ENCODE measurements at regions of chr12 and their contacts with region 1.

Region 1: DNA sequence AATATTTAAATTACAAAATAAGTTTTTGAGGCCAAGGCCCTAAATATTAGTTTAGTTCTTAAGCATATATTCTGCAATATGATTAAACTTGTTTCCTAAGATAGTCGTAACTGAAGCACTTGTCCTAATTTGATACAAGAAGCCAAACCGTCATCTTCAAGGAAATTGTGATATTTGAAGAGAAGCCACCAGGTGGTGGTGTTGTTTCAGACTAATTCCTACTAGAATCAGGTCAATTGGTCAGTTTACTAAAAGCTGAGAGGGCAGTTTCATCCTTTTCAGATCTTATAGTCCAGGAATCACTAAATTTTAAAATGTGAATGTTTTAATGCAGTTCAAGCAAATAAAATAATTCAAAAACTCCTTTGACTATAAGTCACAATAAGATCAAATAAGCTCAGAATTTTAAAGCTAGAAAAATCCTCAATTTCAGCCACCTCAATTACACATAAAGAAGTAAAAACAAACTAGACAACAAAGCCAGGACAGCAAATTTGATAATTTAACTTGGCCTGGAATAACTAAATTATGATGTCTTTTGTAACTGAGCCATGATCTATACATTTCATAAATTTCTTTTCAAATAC is 7.1 kb upstream of the ARL1 start:
- DNase-seq: peak in 1 of 5 donors; percentile 23
- H3K4me3 ChIP-seq: no peak overlapping the region
- H3K27ac ChIP-seq: no peak overlapping the region
- H3K4me1 ChIP-seq: no peaks in the 10 kb centered on the region
- H3K27me3 ChIP-seq: no peaks in the 10 kb centered on the region
- CTCF ChIP-seq: peak in 2 of 3 donors; percentile 35 to 46
- EP300 ChIP-seq: no peak
- POLR2A ChIP-seq: no peak

Region 2: GRCh38 chr12:101439236-101439635 is 24.6 kb after region 1 on chr12:
- intact Hi-C with region 1: no loop called
- DNase-seq: no peak
- H3K4me3 ChIP-seq: no peak overlapping the region
- H3K27ac ChIP-seq: no peak overlapping the region
- H3K4me1 ChIP-seq: no peaks in the 10 kb centered on the region
- H3K27me3 ChIP-seq: no peaks in the 10 kb centered on the region
- CTCF ChIP-seq: no peak
- EP300 ChIP-seq: no peak
- POLR2A ChIP-seq: no peak

Region 3: DNA sequence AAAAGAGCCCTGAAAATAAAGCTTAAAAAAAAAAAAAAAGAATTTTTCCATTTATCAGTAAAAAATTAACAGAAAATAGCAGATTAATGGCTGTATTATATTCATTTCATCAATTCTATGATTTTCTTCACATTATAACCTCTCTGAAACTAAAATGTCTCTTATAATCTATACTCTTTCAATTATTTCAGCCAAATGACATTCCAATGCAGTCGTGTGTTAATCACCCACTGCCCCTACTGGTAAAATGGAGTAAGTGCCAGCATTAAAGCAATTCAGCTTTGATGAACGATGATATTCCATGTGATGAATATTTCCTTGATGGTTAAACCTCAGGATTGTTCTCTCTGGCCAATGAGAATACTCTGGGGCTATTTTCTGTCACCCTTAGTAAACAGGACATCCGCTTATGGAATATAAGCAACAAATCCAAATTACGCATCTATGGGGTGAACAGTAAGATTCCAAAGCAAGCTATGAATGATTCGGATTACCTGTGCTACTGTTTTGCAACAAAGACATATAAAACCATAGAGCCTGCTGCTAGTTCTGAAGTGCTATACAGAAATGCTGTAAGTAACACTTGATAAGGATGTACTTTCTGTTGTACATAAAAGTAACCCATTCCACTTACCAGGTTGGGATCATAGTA is 344.9 kb after region 1 on chr12:
- intact Hi-C with region 1: loop called in 1 of 4 experiments (anchors 10 kb)
- DNase-seq: no peak
- H3K4me3 ChIP-seq: no peak overlapping the region
- H3K27ac ChIP-seq: no peak overlapping the region
- H3K4me1 ChIP-seq: peaks cover 2% of the 10 kb centered on the region
- H3K27me3 ChIP-seq: no peaks in the 10 kb centered on the region
- CTCF ChIP-seq: peak; percentile 13 to 72 (median 44)
- EP300 ChIP-seq: no peak
- POLR2A ChIP-seq: no peak

Region 4: DNA sequence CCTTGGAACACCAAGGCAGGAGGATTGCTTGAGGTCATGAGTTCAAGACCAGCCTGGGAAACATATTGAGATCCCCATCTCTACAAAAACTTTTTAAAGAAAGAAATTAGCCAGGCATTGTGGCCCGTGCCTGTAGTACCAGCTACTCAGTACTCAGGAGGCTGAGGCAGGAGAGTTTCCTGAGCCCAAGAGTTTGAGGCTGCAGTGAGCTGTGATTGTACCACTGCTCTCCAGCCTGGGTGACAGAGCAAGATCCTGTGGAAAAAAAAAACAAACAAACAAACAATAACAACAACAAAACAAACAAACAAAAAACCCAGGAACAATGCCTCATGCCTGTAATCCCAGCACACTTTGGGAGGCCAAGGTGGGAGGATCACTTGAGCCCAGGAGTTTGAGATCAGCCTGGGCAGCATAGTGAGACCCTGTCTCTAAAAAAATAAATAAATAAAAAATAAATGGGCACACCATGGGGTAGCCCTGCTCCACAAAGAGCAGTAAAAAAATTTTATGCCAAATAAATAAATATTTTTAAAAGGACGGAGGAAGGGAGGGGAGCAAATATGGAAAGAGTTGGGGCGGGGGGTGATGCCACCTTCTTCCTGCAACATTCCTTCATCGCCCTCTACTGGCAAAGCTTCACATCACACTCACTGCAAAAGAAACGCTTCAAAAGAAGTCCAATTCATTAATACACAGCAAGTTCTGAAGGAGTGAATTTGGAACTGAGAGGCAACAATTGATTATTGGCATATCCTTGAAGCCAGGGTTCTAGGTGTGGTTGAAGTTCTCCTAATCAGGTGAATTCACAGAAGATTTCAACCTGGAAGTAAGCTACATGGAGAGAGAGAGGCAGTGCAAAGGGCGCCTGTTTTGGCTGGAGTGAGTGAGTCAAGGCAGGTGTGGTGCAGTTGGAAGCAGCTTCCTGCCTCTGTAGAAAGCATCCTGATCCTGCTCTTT is 425.0 kb after region 1 on chr12:
- intact Hi-C with region 1: loop called in 1 of 4 experiments (anchors 5 kb)
- DNase-seq: peak; percentile 42 to 71 (median 50)
- H3K4me3 ChIP-seq: no peak overlapping the region
- H3K27ac ChIP-seq: no peak overlapping the region
- H3K4me1 ChIP-seq: no peaks in the 10 kb centered on the region
- H3K27me3 ChIP-seq: no peaks in the 10 kb centered on the region
- CTCF ChIP-seq: peak; percentile 60 to 78 (median 61)
- EP300 ChIP-seq: no peak
- POLR2A ChIP-seq: no peak

Measured in ovary (tissue), 10 donors.